ENCODE measurements at regions of chr10 and their contacts with region 1.

Region 1: DNA sequence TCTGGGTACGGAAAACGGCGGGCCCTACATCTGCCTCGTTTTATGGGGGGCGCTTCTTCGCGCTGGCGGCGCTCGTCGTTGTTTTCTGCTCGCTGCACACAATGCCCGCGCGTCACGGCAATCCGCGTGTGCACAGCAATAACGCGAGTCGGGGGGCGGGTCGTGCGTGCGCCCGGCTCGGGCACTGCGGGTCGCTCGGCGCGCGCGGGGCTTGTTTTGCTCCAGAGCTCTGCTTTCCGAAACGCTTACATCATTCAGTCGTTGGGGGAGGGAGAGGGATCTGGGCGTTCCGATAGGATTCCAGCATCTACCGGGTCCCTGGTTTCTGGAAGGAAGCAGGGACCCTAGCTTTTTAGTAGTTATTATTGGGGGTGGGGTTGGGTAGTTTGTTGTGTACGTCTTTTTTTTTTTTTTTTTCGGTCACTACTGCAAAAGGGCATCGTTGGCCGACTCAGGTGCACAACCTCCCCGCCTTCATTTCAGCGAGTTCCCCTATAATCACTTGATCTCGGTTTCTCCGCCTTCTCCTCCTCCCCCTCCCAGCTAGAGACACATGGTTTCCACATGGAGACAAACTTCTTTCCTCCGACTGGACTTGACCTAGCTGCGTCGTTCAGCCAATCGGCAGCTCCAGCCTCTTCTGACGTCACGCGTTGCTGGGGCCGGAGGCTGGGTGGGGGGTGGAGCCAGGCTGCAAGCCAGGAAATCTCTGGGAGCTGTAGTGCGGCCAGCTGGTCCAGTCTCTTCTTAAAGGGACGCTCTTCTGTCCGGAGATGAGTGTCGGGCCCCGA is 3.5 kb downstream of the MXI1 start:
- DNase-seq: peak; percentile 90
- H3K4me3 Mint-ChIP-seq: peak overlapping the region; percentile 81
- H3K27ac Mint-ChIP-seq: peak overlapping the region; percentile 87
- H3K4me1 Mint-ChIP-seq: peaks cover 26% of the 10 kb centered on the region
- H3K27me3 Mint-ChIP-seq: peaks cover 10% of the 10 kb centered on the region
- CTCF ChIP-seq: no peak

Region 2: DNA sequence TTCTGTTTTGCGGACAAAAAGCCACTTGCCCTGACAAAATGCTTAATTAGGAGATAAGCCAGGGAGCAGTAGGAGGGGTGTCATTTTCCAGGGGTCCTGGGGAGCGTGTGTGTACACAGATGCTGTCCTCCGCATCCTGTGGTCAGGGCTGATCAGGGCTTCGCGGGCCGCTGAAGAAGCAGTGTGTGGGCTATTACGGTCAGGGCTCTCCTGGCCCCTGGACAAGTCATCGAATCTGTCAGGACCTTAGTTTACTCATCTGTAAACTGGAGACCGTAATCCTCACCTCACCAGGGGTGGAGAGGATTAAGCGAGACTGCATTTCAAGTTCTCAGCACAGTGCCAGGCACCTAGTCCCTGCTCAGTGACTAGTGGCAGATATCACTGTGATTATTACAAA is 29.4 kb before region 1 on chr10:
- CTCF ChIA-PET with region 1: no interaction called
- intact Hi-C with region 1: no loop called
- DNase-seq: no peak
- H3K4me3 Mint-ChIP-seq: no peak overlapping the region
- H3K27ac Mint-ChIP-seq: no peak overlapping the region
- H3K4me1 Mint-ChIP-seq: no peaks in the 10 kb centered on the region
- H3K27me3 Mint-ChIP-seq: no peaks in the 10 kb centered on the region
- CTCF ChIP-seq: no peak

Region 3: GRCh38 chr10:110225756-110226542 is 15.1 kb after region 1 on chr10:
- CTCF ChIA-PET with region 1: interaction called, 14 read pairs
- intact Hi-C with region 1: loop called (anchors 2 kb)
- DNase-seq: peak; percentile 82
- H3K4me3 Mint-ChIP-seq: peak overlapping the region; percentile 76
- H3K27ac Mint-ChIP-seq: peak overlapping the region; percentile 82
- H3K4me1 Mint-ChIP-seq: peaks cover 16% of the 10 kb centered on the region
- H3K27me3 Mint-ChIP-seq: no peaks in the 10 kb centered on the region
- CTCF ChIP-seq: no peak

Region 4: DNA sequence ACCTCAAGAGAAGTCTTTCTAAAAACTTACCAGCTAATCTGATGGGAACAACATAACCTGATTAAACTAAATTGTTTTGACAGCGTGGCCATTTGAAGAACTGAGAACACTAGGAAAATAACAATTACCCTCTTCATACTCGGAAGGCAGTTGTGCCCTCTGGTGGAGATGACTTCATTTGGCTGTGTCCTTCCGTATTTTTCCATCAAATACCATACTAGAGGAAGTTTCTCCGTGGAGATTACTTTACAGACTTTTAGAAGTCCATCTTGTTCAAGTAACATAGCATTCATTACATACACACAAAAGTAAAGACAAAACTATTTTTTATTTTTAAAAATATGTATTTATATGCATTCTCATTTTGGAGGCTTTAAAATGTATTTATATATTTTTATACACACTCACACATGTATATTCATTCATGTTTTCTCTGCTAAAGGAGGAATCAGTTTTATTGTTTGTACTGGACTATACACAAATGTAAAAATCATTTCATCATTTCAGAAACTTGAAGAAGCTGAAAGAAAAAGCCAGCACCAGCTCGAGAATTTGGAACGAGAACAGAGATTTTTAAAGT is 68.6 kb after region 1 on chr10:
- CTCF ChIA-PET with region 1: interaction called, 3 read pairs
- intact Hi-C with region 1: loop called (anchors 5 kb)
- DNase-seq: peak; percentile 39
- H3K4me3 Mint-ChIP-seq: no peak overlapping the region
- H3K27ac Mint-ChIP-seq: no peak overlapping the region
- H3K4me1 Mint-ChIP-seq: peaks cover 5% of the 10 kb centered on the region
- H3K27me3 Mint-ChIP-seq: no peaks in the 10 kb centered on the region
- CTCF ChIP-seq: peak; percentile 26

Measured in Calu3 (cell line).